Gastrocnemius medialis (tissue), 4 donors: ENCODE measurements at regions of chr3 and their contacts with region 1.

Region 1: GRCh38 chr3:54863131-54863765 is 64.6 kb downstream of the LRTM1 start:
- DNase-seq: no peak
- ATAC-seq: no peak
- H3K4me3 ChIP-seq: no peak overlapping the region
- H3K27ac ChIP-seq: no peak overlapping the region
- H3K4me1 ChIP-seq: peaks cover 8 to 19% of the 10 kb centered on the region in 2 donors
- H3K27me3 ChIP-seq: no peaks in the 10 kb centered on the region
- CTCF ChIP-seq: no peak
- POLR2A ChIP-seq: no peak

Region 2: GRCh38 chr3:54342676-54343075 is 520.6 kb before region 1 on chr3:
- in situ Hi-C with region 1: no loop called
- intact Hi-C with region 1: no loop called
- DNase-seq: no peak
- ATAC-seq: no peak
- H3K4me3 ChIP-seq: no peak overlapping the region
- H3K27ac ChIP-seq: no peak overlapping the region
- H3K4me1 ChIP-seq: no peaks in the 10 kb centered on the region
- H3K27me3 ChIP-seq: no peaks in the 10 kb centered on the region
- CTCF ChIP-seq: no peak
- POLR2A ChIP-seq: no peak

Region 3: GRCh38 chr3:54628888-54629368 is 234.3 kb before region 1 on chr3:
- in situ Hi-C with region 1: no loop called
- intact Hi-C with region 1: no loop called
- DNase-seq: no peak
- ATAC-seq: no peak
- H3K4me3 ChIP-seq: no peak overlapping the region
- H3K27ac ChIP-seq: no peak overlapping the region
- H3K4me1 ChIP-seq: no peaks in the 10 kb centered on the region
- H3K27me3 ChIP-seq: no peaks in the 10 kb centered on the region
- CTCF ChIP-seq: no peak
- POLR2A ChIP-seq: no peak

Region 4: GRCh38 chr3:55013145-55013925 is 150.1 kb after region 1 on chr3:
- in situ Hi-C with region 1: loop called in 1 of 4 experiments (anchors 10 kb)
- intact Hi-C with region 1: no loop called
- DNase-seq: no peak
- ATAC-seq: no peak
- H3K4me3 ChIP-seq: no peak overlapping the region
- H3K27ac ChIP-seq: no peak overlapping the region
- H3K4me1 ChIP-seq: no peaks in the 10 kb centered on the region
- H3K27me3 ChIP-seq: no peaks in the 10 kb centered on the region
- CTCF ChIP-seq: no peak
- POLR2A ChIP-seq: no peak

Region 5: DNA sequence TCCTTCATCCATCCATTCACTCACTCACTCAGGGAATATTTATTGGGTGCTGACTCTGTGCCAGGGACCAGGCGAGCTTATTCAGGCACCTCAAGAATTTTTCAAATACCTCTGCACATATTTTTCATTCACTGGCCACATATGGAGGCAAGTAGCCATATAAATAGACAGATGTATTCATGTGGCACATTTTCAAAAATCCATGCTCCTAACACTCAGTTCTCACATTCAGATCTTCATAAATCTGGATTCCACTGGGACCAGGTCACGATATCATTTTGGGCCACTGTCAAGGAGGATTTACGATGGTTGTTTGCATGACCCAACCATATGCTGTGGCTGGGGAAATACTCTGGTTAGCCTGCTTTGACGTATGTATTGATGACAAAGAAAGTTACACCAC is 306.4 kb after region 1 on chr3:
- in situ Hi-C with region 1: loop called in 1 of 4 experiments (anchors 10 kb)
- intact Hi-C with region 1: no loop called
- DNase-seq: no peak
- ATAC-seq: no peak
- H3K4me3 ChIP-seq: no peak overlapping the region
- H3K27ac ChIP-seq: no peak overlapping the region
- H3K4me1 ChIP-seq: peaks cover 0 to 3% of the 10 kb centered on the region in 2 donors
- H3K27me3 ChIP-seq: no peaks in the 10 kb centered on the region
- CTCF ChIP-seq: no peak
- POLR2A ChIP-seq: no peak

Region 6: GRCh38 chr3:55180936-55181535 is 317.8 kb after region 1 on chr3:
- in situ Hi-C with region 1: loop called in 3 of 4 experiments (anchors 5 to 25 kb)
- intact Hi-C with region 1: no loop called
- DNase-seq: no peak
- ATAC-seq: no peak
- H3K4me3 ChIP-seq: no peak overlapping the region
- H3K27ac ChIP-seq: no peak overlapping the region
- H3K4me1 ChIP-seq: no peaks in the 10 kb centered on the region
- H3K27me3 ChIP-seq: no peaks in the 10 kb centered on the region
- CTCF ChIP-seq: peak; percentile 41 to 77 (median 58)
- POLR2A ChIP-seq: no peak

Region 7: GRCh38 chr3:55480911-55481743 is 617.9 kb after region 1 on chr3:
- in situ Hi-C with region 1: no loop called
- intact Hi-C with region 1: no loop called
- DNase-seq: no peak
- ATAC-seq: no peak
- H3K4me3 ChIP-seq: peak overlapping the region; percentile 53 to 59 (median 54)
- H3K27ac ChIP-seq: peak overlapping the region in 3 of 4 donors; percentile 16 to 52 (median 25)
- H3K4me1 ChIP-seq: peaks cover 0 to 22% of the 10 kb centered on the region in 2 donors
- H3K27me3 ChIP-seq: peaks cover 4 to 20% (median 6%) of the 10 kb centered on the region in 3 donors
- CTCF ChIP-seq: no peak
- POLR2A ChIP-seq: no peak